ENCODE measurements at regions of chr20 and their contacts with region 1.

Region 1: GRCh38 chr20:51456511-51457509 is 85.7 kb downstream of the NFATC2 start:
- DNase-seq: peak; percentile 96 to 99 (median 98)
- ATAC-seq: peak; percentile 98
- H3K4me3 ChIP-seq: no peak overlapping the region
- H3K27ac ChIP-seq: peak overlapping the region; percentile 65
- H3K4me1 ChIP-seq: peaks cover 6% of the 10 kb centered on the region
- H3K27me3 ChIP-seq: no peaks in the 10 kb centered on the region

Region 2: DNA sequence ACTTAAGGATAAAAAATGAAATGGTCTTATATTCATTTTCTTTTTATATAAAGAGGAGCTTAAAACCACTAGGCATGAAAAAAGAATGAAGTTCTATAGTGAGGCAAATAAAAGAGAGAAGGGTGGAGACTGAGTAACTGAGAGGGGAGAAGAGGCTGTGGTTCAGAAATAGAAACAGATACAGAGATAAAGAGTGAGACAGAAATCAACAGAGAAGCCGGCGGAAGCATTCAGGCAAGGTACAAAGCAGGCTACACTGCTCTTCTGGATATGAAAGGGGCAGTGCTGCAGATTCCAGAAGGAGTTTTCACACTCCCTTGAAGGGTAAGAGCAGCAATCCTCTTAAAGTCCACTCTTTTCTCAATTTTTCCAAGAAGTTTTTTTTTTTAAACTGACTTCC is 55.8 kb after region 1 on chr20:
- intact Hi-C with region 1: no loop called
- DNase-seq: no peak
- ATAC-seq: no peak
- H3K4me3 ChIP-seq: no peak overlapping the region
- H3K27ac ChIP-seq: no peak overlapping the region
- H3K4me1 ChIP-seq: no peaks in the 10 kb centered on the region
- H3K27me3 ChIP-seq: no peaks in the 10 kb centered on the region

Region 3: DNA sequence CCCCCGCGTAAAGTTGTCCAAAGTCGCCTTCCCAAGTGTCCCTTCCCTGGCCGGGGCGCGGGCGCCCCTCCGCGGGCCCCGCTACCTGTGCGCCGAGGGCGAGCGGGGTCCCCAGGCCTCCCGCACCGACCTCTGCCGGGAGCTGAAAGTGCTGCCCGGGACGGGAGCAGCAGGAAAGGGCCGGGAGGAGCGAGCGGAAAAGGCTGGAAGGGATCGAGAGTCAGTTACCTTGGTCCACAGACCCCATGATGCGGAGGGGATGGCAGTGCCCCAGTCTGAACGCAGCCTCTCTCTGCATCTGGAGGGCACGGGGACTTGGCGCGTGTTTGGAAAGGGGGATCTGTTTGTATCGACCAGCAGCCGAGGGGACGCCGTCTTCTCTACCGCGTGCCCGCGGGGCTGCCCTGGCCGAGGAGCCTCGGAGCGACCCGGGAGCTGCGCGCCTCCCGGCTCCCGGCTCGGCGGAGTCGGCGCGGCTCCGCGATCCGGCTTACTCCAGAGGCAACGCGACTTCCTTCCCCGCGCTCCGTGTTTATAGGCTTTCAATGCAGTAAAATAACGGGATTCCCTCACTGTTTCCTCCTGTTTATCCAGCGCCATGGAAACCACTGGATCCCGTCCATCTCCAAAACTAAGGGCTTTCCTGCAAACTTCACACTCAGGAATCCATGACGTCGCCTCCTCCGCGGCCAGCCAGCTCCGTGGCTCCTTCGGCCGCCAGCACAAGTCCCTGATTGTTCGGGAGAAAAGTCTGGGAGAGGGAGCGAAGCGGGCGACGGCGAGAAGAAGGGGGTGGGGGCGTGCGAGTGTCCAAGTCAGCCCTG is 105.7 kb after region 1 on chr20:
- intact Hi-C with region 1: loop called in 1 of 4 experiments (anchors 10 kb)
- DNase-seq: peak; percentile 92 to 95 (median 95)
- ATAC-seq: peak; percentile 85 to 88
- H3K4me3 ChIP-seq: peak overlapping the region; percentile 50
- H3K27ac ChIP-seq: peak overlapping the region; percentile 85
- H3K4me1 ChIP-seq: peaks cover 9% of the 10 kb centered on the region
- H3K27me3 ChIP-seq: no peaks in the 10 kb centered on the region

Measured in right cardiac atrium (tissue), 5 donors.